CD14-positive monocyte (primary cell): ENCODE measurements at regions of chr17 and their contacts with region 1.

Region 1: GRCh38 chr17:78387977-78388941 is 9.8 kb downstream of the PGS1 start:
- DNase-seq: peak; percentile 93 to 96 (median 93)
- H3K4me3 ChIP-seq: peak overlapping the region in 1 of 3 experiments; percentile 57
- H3K4me3 Mint-ChIP-seq: peak overlapping the region; percentile 27 to 74
- H3K27ac ChIP-seq: peak overlapping the region; percentile 97 to 99
- H3K27ac Mint-ChIP-seq: peak overlapping the region; percentile 97 to 100 (median 98)
- H3K4me1 ChIP-seq: peaks cover 73 to 75% of the 10 kb centered on the region in 2 donors
- H3K4me1 Mint-ChIP-seq: peaks cover 72% of the 10 kb centered on the region
- H3K27me3 ChIP-seq: no peaks in the 10 kb centered on the region
- H3K27me3 Mint-ChIP-seq: peaks cover 0 to 2% (median 1%) of the 10 kb centered on the region in 3 donors
- CTCF ChIP-seq: no peak

Region 2: DNA sequence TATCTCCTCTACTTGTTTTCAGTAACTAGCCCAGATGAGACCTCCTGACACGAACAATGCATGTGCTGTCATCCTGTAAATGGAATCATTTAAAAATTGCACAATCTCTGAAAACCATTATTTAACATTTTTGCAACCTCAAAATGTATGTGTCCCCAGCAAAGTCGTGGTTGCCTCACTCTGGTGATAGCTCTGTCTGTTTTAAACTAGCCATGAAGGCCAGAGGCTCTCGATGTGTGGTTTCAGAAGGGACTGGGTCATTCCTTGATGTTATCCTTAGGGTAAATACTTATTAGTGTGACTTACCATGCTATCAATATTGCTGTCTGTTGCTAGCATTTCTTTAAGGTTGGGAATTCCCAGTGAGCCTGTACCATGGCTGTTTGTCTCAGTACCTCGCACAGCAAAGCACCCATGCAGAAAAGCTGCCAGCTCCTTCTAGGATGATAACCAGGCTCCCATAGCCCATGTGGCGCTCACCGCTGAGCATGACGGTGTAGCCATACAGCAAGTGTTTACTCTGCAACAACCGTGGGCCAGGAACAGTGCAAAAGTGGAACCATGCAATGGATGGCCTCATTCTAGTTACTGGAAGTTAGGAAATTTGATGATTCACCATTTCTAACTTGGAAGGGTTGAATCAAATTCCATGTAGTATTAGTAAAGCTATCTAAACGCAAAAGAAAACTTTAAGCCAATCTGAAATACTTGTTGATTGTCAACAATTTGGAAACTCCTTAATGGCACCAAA is 12.7 kb before region 1 on chr17:
- intact Hi-C with region 1: loop called in 1 of 2 experiments (anchors 2 kb)
- DNase-seq: peak; percentile 78 to 91 (median 88)
- H3K4me3 ChIP-seq: peak overlapping the region in 1 of 3 experiments; percentile 45
- H3K4me3 Mint-ChIP-seq: peak overlapping the region; percentile 30 to 54
- H3K27ac ChIP-seq: peak overlapping the region; percentile 77 to 88
- H3K27ac Mint-ChIP-seq: peak overlapping the region; percentile 80 to 97 (median 92)
- H3K4me1 ChIP-seq: peaks cover 58 to 61% of the 10 kb centered on the region in 2 donors
- H3K4me1 Mint-ChIP-seq: peaks cover 55% of the 10 kb centered on the region
- H3K27me3 ChIP-seq: no peaks in the 10 kb centered on the region
- H3K27me3 Mint-ChIP-seq: peaks cover 0 to 1% (median under 1%) of the 10 kb centered on the region in 3 donors
- CTCF ChIP-seq: no peak